HCT116 (cell line): ENCODE measurements at regions of chr1 and their contacts with region 1.

Region 1: DNA sequence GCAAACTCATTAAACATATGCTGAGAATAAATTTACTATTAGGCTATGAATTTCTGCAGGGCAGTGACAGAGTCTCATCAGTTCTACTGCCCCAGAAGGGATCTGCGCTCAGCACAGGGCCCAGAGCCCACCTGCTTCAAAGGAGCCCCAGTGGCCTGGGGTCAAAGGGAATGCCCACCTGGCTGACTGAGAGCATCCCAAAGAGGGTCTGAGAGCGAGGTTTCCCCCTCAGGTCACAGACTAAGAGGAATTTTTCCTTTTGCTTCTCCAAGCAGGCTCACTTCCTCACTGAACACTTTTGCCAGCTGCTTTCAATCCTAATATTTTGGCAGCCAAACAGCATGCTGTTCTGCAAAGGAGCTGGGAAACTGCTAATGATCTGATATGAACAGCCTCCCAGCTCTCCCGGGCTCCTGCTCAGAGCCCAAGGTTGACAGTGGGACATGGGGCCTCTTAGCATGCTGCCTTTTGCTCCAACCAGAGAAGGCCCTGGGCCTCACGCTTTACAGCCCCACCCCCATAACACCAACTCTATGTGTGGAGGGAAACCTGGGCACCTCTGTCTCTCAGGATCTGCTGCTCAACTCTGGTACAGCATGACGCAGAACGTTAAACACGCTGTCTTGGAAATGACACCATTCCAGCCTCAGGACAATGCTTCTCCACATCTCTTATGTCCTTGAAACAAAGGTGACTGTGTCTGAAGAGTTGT is 70.7 kb upstream of the SYT6 start:
- DNase-seq: no peak
- ATAC-seq: no peak
- H3K4me3 ChIP-seq: no peak overlapping the region
- H3K27ac ChIP-seq: no peak overlapping the region
- H3K4me1 ChIP-seq: no peaks in the 10 kb centered on the region
- H3K27me3 ChIP-seq: peaks cover 10% of the 10 kb centered on the region
- CTCF ChIP-seq: no peak
- POLR2A ChIP-seq: no peak
- RAD21 ChIP-seq: no peak

Region 2: DNA sequence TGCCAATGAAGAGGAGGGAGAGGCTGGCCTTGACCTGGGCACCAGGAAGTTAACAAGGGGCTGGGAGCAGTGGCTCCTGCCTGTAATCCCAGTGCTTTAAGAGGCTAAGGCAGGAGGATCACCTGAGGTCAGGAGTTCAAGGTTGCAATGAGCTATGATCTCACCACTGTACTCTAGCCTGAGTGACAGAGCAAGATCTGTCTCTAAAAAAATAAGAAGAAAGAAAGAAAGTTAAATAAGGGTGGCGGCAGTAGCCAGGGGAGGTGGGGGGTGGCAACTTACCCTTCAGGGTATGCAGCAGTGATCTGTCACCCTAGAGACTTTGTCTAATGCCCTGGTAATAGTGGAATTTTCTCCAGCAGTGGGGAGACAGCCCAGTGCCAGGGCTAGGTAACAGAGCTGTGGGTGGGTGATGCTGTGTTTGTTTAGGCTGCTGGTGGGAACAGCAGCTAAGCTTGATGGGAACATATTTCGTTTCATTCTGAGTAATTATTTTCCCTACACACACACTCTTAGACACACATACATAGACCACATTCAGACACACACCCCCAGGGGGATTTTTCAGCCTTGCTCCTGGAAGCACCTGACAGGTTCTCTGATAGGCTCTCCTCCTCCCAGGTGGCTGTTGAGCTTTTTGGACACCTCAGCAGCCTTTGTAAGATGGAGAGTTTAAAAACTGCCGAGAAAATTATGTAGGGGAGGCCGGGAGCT is 59.4 kb before region 1 on chr1:
- CTCF ChIA-PET with region 1: no interaction called
- POLR2A ChIA-PET with region 1: no interaction called
- RAD21 ChIA-PET with region 1: no interaction called
- intact Hi-C with region 1: loop called (anchors 10 kb)
- DNase-seq: no peak
- ATAC-seq: no peak
- H3K4me3 ChIP-seq: no peak overlapping the region
- H3K27ac ChIP-seq: no peak overlapping the region
- H3K4me1 ChIP-seq: no peaks in the 10 kb centered on the region
- H3K27me3 ChIP-seq: peaks cover 24% of the 10 kb centered on the region
- CTCF ChIP-seq: no peak
- POLR2A ChIP-seq: no peak
- RAD21 ChIP-seq: no peak